Activated naive CD4-positive, alpha-beta T cell treated with anti-CD3 and anti-CD28 coated beads for 36 hours (primary cell): ENCODE measurements at regions of chr1 and their contacts with region 1.

Region 1: GRCh38 chr1:89524369-89525168 is at the start of gene LRRC8B:
- DNase-seq: peak; percentile 93
- H3K4me3 Mint-ChIP-seq: no peak within 1 kb of the TSS
- H3K27ac Mint-ChIP-seq: no peak within 1 kb of the TSS
- H3K4me1 Mint-ChIP-seq: peaks cover 34% of the 10 kb centered on the region
- H3K27me3 Mint-ChIP-seq: no peaks in the 10 kb centered on the region
- total RNA-seq, gene LRRC8B: 18.0 to 20.4 TPM

Region 2: GRCh38 chr1:88983791-88984559 is 540.6 kb before region 1 on chr1:
- CTCF ChIA-PET with region 1: no interaction called
- intact Hi-C with region 1: loop called (anchors 2 kb)
- DNase-seq: peak; percentile 42
- H3K4me3 Mint-ChIP-seq: peak overlapping the region; percentile 27
- H3K27ac Mint-ChIP-seq: peak overlapping the region; percentile 47
- H3K4me1 Mint-ChIP-seq: peaks cover 80% of the 10 kb centered on the region
- H3K27me3 Mint-ChIP-seq: no peaks in the 10 kb centered on the region

Region 3: GRCh38 chr1:89483010-89483756 is 41.4 kb before region 1 on chr1:
- CTCF ChIA-PET with region 1: interaction called, 5 read pairs
- intact Hi-C with region 1: loop called (anchors 1 kb)
- DNase-seq: peak; percentile 93
- H3K4me3 Mint-ChIP-seq: no peak overlapping the region
- H3K27ac Mint-ChIP-seq: no peak overlapping the region
- H3K4me1 Mint-ChIP-seq: peaks cover 12% of the 10 kb centered on the region
- H3K27me3 Mint-ChIP-seq: no peaks in the 10 kb centered on the region

Region 4: GRCh38 chr1:89547563-89548485 is 23.3 kb after region 1 on chr1:
- CTCF ChIA-PET with region 1: interaction called, 5 read pairs
- intact Hi-C with region 1: loop called (anchors 1 kb)
- DNase-seq: peak; percentile 56
- H3K4me3 Mint-ChIP-seq: no peak overlapping the region
- H3K27ac Mint-ChIP-seq: peak overlapping the region; percentile 95
- H3K4me1 Mint-ChIP-seq: peaks cover 84% of the 10 kb centered on the region
- H3K27me3 Mint-ChIP-seq: no peaks in the 10 kb centered on the region

Region 5: DNA sequence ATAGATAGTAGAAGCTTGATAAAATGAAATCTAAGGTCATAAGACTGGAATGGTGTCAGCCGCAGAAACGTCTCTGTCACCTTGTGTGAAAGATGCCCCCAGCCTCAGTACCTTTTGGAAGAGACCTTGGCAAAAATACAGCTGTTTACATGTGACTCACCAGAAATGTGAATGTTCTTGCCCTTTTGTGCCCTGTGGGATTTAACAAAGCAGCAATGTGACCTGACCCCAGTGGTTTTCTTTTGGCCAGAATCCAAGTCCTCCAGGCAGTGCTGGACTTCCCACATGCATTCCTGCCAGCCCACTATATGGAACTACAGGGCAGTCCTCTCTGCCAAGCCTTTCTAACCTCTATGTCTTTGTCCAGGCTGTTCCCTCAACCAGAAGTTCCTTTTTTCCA is 81.1 kb after region 1 on chr1:
- CTCF ChIA-PET with region 1: interaction called, 35 read pairs
- intact Hi-C with region 1: loop called (anchors 1 kb)
- DNase-seq: no peak
- H3K4me3 Mint-ChIP-seq: no peak overlapping the region
- H3K27ac Mint-ChIP-seq: no peak overlapping the region
- H3K4me1 Mint-ChIP-seq: peaks cover 95% of the 10 kb centered on the region
- H3K27me3 Mint-ChIP-seq: no peaks in the 10 kb centered on the region

Region 6: DNA sequence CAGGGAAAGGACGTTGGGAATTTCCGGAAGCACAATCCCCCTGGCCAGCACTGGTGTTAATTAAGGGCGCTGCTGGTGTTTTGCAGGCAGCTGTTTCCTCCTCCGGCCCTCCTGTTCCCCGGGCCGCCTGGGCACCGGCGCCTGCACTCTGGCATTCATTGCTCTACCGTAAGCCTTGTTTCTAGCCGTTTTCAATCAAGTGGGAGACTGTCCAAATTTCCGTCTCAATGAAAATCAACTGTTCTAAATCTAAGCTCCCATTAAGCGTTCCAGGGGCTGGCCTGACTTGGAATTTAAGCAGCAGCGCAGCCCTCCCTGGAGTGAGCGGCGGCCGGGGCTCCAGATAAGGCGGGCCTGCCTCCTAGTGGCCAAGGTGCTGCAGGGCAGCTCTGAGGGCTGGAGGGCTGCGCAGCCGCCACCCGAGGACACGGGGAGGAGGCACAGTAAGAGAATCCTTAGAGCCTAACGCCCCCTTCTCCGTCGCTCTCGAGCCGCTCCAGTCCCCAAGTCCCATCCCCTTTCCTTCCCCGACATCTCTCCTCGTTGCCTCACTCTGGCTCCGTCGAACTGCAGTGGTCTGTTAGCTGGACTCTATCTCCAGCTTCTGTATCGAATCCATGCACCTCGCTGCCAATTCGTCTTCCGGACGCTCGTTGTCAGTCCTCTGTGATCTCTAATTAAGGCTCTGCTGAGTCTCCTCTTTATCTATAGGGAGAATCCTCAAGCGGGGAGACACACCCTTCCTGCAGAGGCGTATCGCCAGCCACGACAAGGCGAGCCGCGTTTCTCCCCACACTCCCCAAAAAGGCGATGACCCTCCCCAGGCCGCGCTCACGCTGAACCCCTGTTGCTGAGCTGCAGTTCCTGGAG is 238.4 kb after region 1 on chr1:
- CTCF ChIA-PET with region 1: interaction called, 8 read pairs
- intact Hi-C with region 1: loop called (anchors 1 kb)
- DNase-seq: peak; percentile 92
- H3K4me3 Mint-ChIP-seq: peak overlapping the region; percentile 86
- H3K27ac Mint-ChIP-seq: peak overlapping the region; percentile 81
- H3K4me1 Mint-ChIP-seq: peaks cover 42% of the 10 kb centered on the region
- H3K27me3 Mint-ChIP-seq: no peaks in the 10 kb centered on the region

Region 7: DNA sequence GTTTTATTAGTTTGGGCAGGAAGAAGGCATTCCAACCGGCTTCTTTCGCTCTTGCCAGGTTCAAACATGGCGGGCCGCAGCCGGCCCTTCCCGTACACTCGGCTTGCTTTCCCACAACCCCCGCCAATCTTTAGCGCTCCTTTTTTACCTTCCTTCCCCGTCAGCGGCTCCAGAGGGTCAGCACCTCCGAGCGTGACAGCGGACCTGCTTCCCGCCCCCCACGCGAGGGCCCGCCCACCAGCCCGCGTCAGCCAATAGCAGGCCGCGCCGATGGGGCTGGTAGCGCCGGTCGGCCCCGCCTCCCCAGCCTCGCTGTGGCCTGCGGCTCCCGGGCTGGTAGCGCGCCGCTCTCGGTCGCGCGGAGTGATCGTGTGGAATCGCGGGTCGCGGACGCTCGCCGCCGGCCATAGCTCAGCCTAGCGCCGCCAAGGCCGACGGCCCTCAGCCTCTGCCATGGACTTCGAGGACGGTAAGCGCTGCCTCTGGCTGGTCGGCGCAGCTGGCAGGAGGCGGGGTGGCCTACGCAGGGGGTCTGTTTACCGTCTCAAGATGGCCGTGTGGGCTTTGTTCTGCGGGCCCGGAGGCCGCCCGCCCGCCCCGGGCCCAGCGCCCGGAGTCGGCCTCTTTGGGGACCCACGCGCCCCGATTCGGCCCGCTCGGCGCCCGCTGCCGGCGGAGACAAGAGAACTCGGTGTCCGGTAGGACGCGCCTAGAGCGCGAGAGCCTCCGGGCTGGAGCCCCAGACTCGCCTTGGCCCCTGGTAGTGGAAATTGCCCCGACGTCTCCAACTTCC is 470.4 kb after region 1 on chr1 and contains the start of gene ZNF326:
- CTCF ChIA-PET with region 1: no interaction called
- intact Hi-C with region 1: loop called (anchors 2 kb)
- DNase-seq: peak; percentile 94
- H3K4me3 Mint-ChIP-seq: peak within 1 kb of the TSS; percentile 96
- H3K27ac Mint-ChIP-seq: peak within 1 kb of the TSS; percentile 90
- H3K4me1 Mint-ChIP-seq: peaks cover 42% of the 10 kb centered on the region
- H3K27me3 Mint-ChIP-seq: no peaks in the 10 kb centered on the region
- total RNA-seq, gene ZNF326: 17.4 to 17.9 TPM

Region 8: DNA sequence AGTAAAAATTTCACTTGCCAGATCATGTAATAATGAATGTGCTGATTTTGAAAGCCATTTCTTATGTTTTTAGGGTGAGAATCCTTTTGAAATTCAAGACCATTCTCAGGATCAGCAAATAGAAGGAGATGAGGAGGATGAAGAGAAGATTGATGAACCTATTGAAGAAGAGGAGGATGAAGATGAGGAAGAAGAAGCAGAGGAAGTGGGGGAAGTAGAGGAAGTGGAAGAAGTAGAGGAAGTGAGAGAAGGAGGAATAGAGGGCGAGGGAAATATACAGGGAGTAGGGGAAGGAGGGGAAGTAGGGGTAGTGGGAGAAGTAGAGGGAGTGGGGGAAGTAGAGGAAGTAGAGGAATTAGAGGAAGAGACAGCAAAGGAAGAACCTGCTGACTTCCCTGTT is 502.7 kb after region 1 on chr1:
- CTCF ChIA-PET with region 1: no interaction called
- intact Hi-C with region 1: no loop called
- DNase-seq: no peak
- H3K4me3 Mint-ChIP-seq: no peak overlapping the region
- H3K27ac Mint-ChIP-seq: no peak overlapping the region
- H3K4me1 Mint-ChIP-seq: no peaks in the 10 kb centered on the region
- H3K27me3 Mint-ChIP-seq: no peaks in the 10 kb centered on the region